ENCODE measurements at regions of chr4 and their contacts with region 1.

Region 1: GRCh38 chr4:183504064-183504929 is 561 bp upstream of the ING2 start:
- DNase-seq: peak; percentile 99
- ATAC-seq: peak; percentile 78
- H3K4me3 ChIP-seq: peak overlapping the region; percentile 72 to 99 (median 85)
- H3K4me3 Mint-ChIP-seq: peak overlapping the region; percentile 98
- H3K27ac ChIP-seq: peak overlapping the region; percentile 74 to 97
- H3K27ac Mint-ChIP-seq: peak overlapping the region; percentile 100
- H3K4me1 ChIP-seq: peaks cover 7 to 10% of the 10 kb centered on the region in 2 donors
- H3K4me1 Mint-ChIP-seq: peaks cover 14% of the 10 kb centered on the region
- H3K27me3 ChIP-seq: no peaks in the 10 kb centered on the region
- H3K27me3 Mint-ChIP-seq: no peaks in the 10 kb centered on the region
- CTCF ChIP-seq: no peak

Region 2: GRCh38 chr4:183407128-183407585 is 97.1 kb before region 1 on chr4:
- CTCF ChIA-PET with region 1: interaction called, 4 read pairs
- POLR2A ChIA-PET with region 1: no interaction called
- intact Hi-C with region 1: loop called (anchors 1 kb)
- DNase-seq: peak; percentile 89
- ATAC-seq: peak; percentile 99
- H3K4me3 ChIP-seq: peak overlapping the region in 4 of 5 experiments; percentile 58 to 74 (median 62)
- H3K4me3 Mint-ChIP-seq: peak overlapping the region; percentile 80
- H3K27ac ChIP-seq: peak overlapping the region; percentile 53 to 68
- H3K27ac Mint-ChIP-seq: peak overlapping the region; percentile 70
- H3K4me1 ChIP-seq: peaks cover 5 to 10% of the 10 kb centered on the region in 2 donors
- H3K4me1 Mint-ChIP-seq: peaks cover 17% of the 10 kb centered on the region
- H3K27me3 ChIP-seq: no peaks in the 10 kb centered on the region
- H3K27me3 Mint-ChIP-seq: no peaks in the 10 kb centered on the region
- CTCF ChIP-seq: peak; percentile 87

Region 3: DNA sequence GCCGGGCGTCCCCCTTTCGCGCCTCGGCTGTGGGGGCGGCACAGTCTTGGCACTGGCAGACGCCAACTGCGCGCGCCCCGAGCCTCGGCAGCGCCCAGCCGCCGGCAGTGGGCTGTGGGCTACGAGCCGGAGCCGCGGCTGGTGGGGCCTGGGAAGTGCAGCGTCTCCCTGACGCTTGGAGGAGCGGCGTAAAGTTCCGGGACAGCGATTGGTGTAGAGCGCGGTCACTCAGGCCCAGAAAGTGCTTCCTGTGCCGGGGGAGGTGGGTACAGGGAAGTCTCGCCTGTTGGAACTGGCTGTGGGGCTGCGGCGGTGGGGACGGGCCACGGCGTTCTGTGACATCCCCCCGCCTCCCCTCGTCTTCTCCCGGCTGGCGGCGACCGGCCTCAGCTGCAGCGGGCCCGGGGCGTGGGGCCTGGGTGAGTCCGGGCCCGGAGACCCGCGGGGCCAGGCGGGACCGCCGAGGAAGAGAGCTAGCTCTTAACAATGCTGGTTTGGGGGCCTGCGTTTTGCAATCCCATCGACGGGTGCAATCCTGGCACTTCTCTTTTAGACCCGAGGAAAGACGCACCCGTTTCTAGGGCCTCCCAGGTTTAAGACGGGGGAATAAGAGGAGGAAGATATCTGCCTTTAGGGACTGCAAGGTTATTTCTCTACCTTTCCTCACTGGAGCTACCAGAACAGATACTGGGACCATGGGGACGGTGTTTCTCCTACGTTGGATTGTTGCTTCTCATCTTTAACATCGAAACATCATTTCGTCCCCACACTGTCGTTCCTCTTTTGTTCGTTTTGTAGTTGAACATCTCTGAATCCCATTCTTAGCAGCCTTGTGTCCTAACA is 155.0 kb after region 1 on chr4 and contains the starts of genes RWDD4 and TRAPPC11:
- CTCF ChIA-PET with region 1: no interaction called
- POLR2A ChIA-PET with region 1: interaction called, 8 read pairs
- intact Hi-C with region 1: loop called (anchors 1 kb)
- DNase-seq: peak; percentile 97
- ATAC-seq: peak; percentile 98
- H3K4me3 ChIP-seq: peak within 1 kb of the TSS; percentile 62 to 91 (median 87)
- H3K4me3 Mint-ChIP-seq: peak within 1 kb of the TSS; percentile 93
- H3K27ac ChIP-seq: peak within 1 kb of the TSS; percentile 70 to 90
- H3K27ac Mint-ChIP-seq: peak within 1 kb of the TSS; percentile 93
- H3K4me1 ChIP-seq: peaks cover 17 to 24% of the 10 kb centered on the region in 2 donors
- H3K4me1 Mint-ChIP-seq: peaks cover 26% of the 10 kb centered on the region
- H3K27me3 ChIP-seq: no peaks in the 10 kb centered on the region
- H3K27me3 Mint-ChIP-seq: no peaks in the 10 kb centered on the region
- CTCF ChIP-seq: no peak
- total RNA-seq, gene RWDD4: 15.7 and 16.3 TPM in 2 replicates
- total RNA-seq, gene TRAPPC11: 53.8 and 56.6 TPM in 2 replicates

Region 4: DNA sequence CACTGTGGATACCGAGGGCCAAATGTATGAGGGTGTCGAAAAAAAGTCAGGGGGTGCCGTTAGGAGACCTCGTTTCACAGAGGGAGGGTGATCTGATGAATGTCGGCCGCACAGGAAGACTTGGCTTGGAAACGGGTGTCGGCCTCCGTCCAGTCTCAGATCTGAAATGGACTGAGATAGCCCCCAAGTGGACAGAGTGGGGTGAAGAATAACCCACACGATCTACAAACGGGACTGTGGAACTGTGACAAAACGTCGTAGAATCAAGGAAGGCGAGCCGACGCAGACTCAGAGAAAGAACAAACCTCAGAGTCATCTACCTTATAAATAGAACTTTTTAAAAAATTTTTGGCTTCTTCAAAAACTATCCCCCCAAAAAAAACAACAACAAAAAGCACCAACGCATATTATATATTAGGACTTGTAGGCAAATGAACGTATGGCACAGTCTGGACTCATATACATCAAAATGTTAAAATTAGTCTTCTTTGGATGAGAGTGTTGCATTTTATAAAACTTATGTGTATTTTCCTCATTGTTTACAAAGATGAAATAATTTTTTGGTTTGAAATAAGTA is 1033.8 kb after region 1 on chr4:
- CTCF ChIA-PET with region 1: no interaction called
- POLR2A ChIA-PET with region 1: no interaction called
- intact Hi-C with region 1: loop called (anchors 5 kb)
- DNase-seq: peak; percentile 90
- ATAC-seq: peak; percentile 71
- H3K4me3 ChIP-seq: peak overlapping the region; percentile 74 to 98 (median 81)
- H3K4me3 Mint-ChIP-seq: peak overlapping the region; percentile 96
- H3K27ac ChIP-seq: peak overlapping the region; percentile 98
- H3K27ac Mint-ChIP-seq: peak overlapping the region; percentile 100
- H3K4me1 ChIP-seq: peaks cover 33 to 38% of the 10 kb centered on the region in 2 donors
- H3K4me1 Mint-ChIP-seq: peaks cover 42% of the 10 kb centered on the region
- H3K27me3 ChIP-seq: no peaks in the 10 kb centered on the region
- H3K27me3 Mint-ChIP-seq: no peaks in the 10 kb centered on the region
- CTCF ChIP-seq: peak; percentile 61

Region 5: DNA sequence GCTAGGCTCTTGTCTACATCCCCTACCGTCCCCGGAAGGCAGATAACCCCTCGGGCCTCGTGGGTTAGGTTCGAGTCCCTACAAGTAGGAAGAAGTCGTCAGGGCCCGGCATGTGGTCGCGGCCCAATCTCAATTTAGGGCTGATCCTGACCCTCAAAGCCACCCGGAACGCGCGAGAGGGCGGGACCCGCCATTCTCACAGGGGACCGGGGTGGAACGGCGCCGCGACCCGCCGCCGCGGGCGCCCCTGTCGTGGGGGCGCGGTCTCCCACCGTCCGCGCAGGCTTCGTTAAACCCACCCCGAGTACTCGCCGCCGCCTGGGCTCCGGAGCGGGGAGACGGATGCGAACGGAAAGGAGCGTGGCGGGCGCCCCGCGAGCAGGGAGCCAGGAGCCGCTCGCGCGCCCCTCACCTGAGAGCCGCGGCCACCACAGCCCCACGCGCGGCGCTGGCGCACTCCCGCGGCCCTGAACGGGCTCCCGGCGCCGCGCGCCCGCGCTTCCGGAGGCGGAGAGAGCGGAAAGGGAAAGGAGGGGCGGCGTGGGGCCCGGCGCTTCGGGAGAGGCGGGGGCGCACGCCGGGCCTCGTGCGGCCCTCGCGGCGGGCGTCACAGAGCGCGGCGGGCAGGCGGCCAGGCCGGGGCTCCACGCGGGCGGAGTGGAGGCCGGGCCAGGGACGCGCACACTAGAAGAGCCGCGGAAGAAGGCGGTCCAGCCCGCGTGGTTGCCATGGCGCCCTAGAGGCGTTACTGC is 1699.4 kb after region 1 on chr4 and contains the start of gene CFAP97:
- CTCF ChIA-PET with region 1: no interaction called
- POLR2A ChIA-PET with region 1: no interaction called
- intact Hi-C with region 1: loop called (anchors 5 kb)
- DNase-seq: peak; percentile 90
- ATAC-seq: peak; percentile 81
- H3K4me3 ChIP-seq: peak within 1 kb of the TSS; percentile 58 to 73 (median 71)
- H3K4me3 Mint-ChIP-seq: peak within 1 kb of the TSS; percentile 97
- H3K27ac ChIP-seq: peak within 1 kb of the TSS; percentile 76 to 90
- H3K27ac Mint-ChIP-seq: peak within 1 kb of the TSS; percentile 98
- H3K4me1 ChIP-seq: peaks cover 31 to 45% of the 10 kb centered on the region in 2 donors
- H3K4me1 Mint-ChIP-seq: peaks cover 45% of the 10 kb centered on the region
- H3K27me3 ChIP-seq: no peaks in the 10 kb centered on the region
- H3K27me3 Mint-ChIP-seq: no peaks in the 10 kb centered on the region
- CTCF ChIP-seq: peak; percentile 10
- total RNA-seq, gene CFAP97: 32.0 and 32.4 TPM in 2 replicates